Ascending aorta (tissue), 2 donors: ENCODE measurements at regions of chr9 and their contacts with region 1.

Region 1: GRCh38 chr9:13898957-13899356 is 415.0 kb downstream of the NFIB start:
- DNase-seq: no peak
- H3K4me3 ChIP-seq: no peak overlapping the region
- H3K27ac ChIP-seq: peak overlapping the region in 1 of 2 donors; percentile 62
- H3K4me1 ChIP-seq: peaks cover 2 to 30% of the 10 kb centered on the region in 2 donors
- H3K27me3 ChIP-seq: no peaks in the 10 kb centered on the region
- CTCF ChIP-seq: no peak

Region 2: DNA sequence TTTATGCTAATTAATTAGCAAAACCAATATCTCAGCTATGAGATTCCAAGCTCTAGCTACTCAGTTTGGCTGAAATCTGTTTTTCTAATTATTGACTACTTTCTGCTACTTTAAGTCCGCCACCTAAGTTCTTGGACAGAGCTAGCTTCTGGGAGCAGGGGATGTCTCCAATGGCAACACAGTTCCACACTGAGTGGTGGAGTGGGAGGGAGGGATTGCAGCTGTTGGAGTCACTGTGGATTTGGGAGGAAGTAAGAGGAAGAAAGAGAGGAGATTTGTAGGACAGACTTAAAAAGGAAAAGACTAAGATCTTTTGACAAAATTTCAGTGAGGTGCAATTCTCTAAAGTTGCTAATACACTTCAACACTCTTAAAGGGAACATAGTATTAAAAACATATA is 35.8 kb before region 1 on chr9:
- intact Hi-C with region 1: loop called (anchors 5 kb)
- DNase-seq: peak in 1 of 2 donors; percentile 69
- H3K4me3 ChIP-seq: no peak overlapping the region
- H3K27ac ChIP-seq: peak overlapping the region in 1 of 2 donors; percentile 31
- H3K4me1 ChIP-seq: peaks cover 0 to 14% of the 10 kb centered on the region in 2 donors
- H3K27me3 ChIP-seq: no peaks in the 10 kb centered on the region
- CTCF ChIP-seq: no peak

Region 3: DNA sequence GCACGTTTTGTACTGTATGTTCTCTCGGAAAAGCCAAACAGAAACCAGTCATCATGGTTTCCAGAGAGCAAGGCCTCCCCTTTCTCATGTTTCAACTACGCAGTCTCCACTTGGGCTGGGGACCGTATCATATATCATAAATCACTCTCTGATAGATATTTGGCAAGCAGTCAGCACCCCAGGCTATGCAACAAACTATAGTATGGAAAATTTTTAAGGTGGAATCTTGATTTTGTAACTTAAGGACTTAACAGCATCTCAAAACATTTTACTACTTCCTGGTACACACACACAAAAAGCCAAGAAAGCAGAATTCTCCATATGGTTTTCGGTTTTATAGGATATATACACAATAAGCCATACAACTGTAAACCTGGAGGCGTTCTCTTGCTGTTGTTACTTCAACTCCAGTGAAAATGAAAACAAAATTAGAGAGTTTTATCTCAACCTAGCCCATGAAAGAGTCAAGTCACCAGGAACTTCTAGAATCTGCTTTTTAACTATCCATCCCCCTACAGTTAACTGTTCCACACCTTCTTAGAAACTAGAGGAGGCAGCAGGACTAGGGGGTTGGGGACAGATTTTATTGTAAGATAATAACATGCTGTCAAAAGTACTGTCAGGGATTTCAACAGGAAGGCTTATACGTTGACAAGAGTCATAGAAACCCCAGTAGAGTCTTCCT is 131.6 kb after region 1 on chr9:
- intact Hi-C with region 1: loop called (anchors 5 kb)
- DNase-seq: no peak
- H3K4me3 ChIP-seq: peak overlapping the region; percentile 39 to 58
- H3K27ac ChIP-seq: peak overlapping the region; percentile 80 to 84
- H3K4me1 ChIP-seq: peaks cover 6 to 24% of the 10 kb centered on the region in 2 donors
- H3K27me3 ChIP-seq: no peaks in the 10 kb centered on the region
- CTCF ChIP-seq: no peak

Region 4: GRCh38 chr9:14322211-14323082 is 423.5 kb after region 1 on chr9:
- intact Hi-C with region 1: loop called (anchors 10 kb)
- DNase-seq: peak; percentile 51 to 94
- H3K4me3 ChIP-seq: peak overlapping the region; percentile 88 to 95
- H3K27ac ChIP-seq: peak overlapping the region; percentile 96 to 98
- H3K4me1 ChIP-seq: peaks cover 7 to 24% of the 10 kb centered on the region in 2 donors
- H3K27me3 ChIP-seq: no peaks in the 10 kb centered on the region
- CTCF ChIP-seq: peak; percentile 47 to 69 (median 63)